Dorsolateral prefrontal cortex (tissue), 120 donors: ENCODE measurements at regions of chr5 and their contacts with region 1.

Region 1: DNA sequence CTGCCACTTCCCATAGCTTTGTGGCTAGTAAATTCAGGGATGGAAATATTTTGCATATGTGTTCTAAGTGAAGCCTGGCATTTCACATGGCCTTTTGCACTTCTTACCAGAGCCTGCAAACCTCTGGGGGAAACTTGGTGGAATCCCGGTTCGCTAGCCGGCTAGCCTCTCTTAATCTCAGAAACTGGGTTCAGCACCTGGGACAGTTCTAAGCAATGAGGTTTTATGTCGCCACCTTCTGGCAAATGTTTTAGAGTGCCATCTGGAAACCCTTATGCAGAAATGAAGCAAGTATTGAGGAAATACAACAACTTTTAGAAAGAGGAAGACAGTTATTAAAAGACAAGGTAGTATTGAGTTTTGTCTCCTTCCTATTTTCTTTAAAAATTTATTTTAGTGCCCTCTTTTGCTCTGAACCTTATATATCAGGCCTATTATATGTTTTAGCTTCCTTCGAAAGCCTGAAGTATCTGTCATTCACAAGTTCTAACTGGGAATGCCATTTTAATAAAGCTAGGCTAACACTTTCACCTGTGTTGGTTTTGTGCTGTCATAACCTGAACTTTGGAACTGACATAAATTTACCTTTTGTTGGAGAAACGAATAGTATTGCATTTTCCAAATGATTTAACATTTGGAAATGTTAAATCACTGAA is 963 bp upstream of the HTR1A start:
- DNase-seq: peak in 6 of 10 donors; percentile 31 to 64 (median 40)
- H3K4me3 ChIP-seq: peak overlapping the region in 35 of 59 donors; percentile 7 to 66 (median 51)
- H3K27ac ChIP-seq: no peak overlapping the region
- H3K27me3 ChIP-seq: peaks cover 0 to 45% (median 29%) of the 10 kb centered on the region in 45 donors
- CTCF ChIP-seq: peak in 55 of 56 donors; percentile 29 to 81 (median 65)

Region 2: GRCh38 chr5:63125862-63126261 is 837.3 kb before region 1 on chr5:
- intact Hi-C with region 1: loop called in 1 of 2 experiments (anchors 10 kb)
- DNase-seq: peak in 1 of 10 donors; percentile 4
- H3K4me3 ChIP-seq: no peak overlapping the region
- H3K27ac ChIP-seq: no peak overlapping the region
- H3K27me3 ChIP-seq: no peaks in the 10 kb centered on the region
- CTCF ChIP-seq: peak in 47 of 56 donors; percentile 17 to 58 (median 41)

Region 3: GRCh38 chr5:63401436-63402046 is 561.7 kb before region 1 on chr5:
- intact Hi-C with region 1: loop called (anchors 5 kb)
- DNase-seq: peak; percentile 36 to 83 (median 65)
- H3K4me3 ChIP-seq: no peak overlapping the region
- H3K27ac ChIP-seq: no peak overlapping the region
- H3K27me3 ChIP-seq: peaks cover 0 to 12% (median 0%) of the 10 kb centered on the region in 45 donors
- CTCF ChIP-seq: peak; percentile 41 to 85 (median 70)